Transverse colon (tissue), 4 donors: ENCODE measurements at regions of chr3 and their contacts with region 1.

Region 1: GRCh38 chr3:14124615-14125190 is at the starts of genes CHCHD4 and TMEM43:
- DNase-seq: peak; percentile 99
- H3K4me3 ChIP-seq: peak within 1 kb of the TSS; percentile 60 to 88 (median 78)
- H3K27ac ChIP-seq: peak within 1 kb of the TSS; percentile 90 to 97 (median 96)
- H3K4me1 ChIP-seq: peaks cover 16 to 33% (median 29%) of the 10 kb centered on the region in 4 donors
- H3K27me3 ChIP-seq: no peaks in the 10 kb centered on the region
- CTCF ChIP-seq: peak in 1 of 5 experiments; percentile 20
- EP300 ChIP-seq: no peak
- POLR2A ChIP-seq: peak; percentile 84
- total RNA-seq, gene CHCHD4: 0.80 to 22.1 (median 13.5) TPM
- total RNA-seq, gene TMEM43: 30.8 to 128 (median 48.5) TPM

Region 2: DNA sequence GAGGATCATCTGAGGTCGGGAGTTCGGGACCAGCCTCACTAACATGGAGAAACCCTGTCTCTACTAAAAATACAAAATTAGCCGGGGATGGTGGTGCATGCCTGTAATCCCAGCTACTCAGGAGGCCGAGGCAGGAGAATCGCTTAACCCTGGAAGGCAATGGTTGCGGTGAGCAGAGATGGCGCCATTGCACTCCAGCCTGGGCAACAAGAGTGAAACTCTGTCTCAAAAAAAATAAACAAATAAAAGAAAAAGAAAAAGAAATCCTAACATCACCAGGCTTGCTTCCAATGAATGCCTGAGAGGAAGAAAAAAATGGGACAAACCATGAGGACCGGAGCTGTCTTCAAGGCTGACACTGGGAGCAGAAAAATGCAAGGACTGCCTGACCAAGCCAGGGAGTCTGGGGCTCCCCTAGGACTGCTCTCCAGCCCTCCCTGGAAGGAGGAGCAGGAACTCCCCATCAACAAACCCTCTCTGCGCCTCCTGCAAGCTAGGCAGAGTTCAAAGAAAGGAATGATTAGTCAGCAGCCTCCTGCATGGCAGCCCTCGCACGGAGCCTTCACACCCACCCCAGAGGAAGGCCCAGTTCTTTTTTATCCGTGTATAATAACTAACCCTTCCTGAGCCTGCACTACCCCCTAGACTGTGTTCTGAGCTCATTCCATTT is 760.0 kb before region 1 on chr3:
- in situ Hi-C with region 1: no loop called
- intact Hi-C with region 1: no loop called
- DNase-seq: no peak
- H3K4me3 ChIP-seq: no peak overlapping the region
- H3K27ac ChIP-seq: no peak overlapping the region
- H3K4me1 ChIP-seq: no peaks in the 10 kb centered on the region
- H3K27me3 ChIP-seq: no peaks in the 10 kb centered on the region
- CTCF ChIP-seq: no peak
- EP300 ChIP-seq: no peak
- POLR2A ChIP-seq: no peak

Region 3: DNA sequence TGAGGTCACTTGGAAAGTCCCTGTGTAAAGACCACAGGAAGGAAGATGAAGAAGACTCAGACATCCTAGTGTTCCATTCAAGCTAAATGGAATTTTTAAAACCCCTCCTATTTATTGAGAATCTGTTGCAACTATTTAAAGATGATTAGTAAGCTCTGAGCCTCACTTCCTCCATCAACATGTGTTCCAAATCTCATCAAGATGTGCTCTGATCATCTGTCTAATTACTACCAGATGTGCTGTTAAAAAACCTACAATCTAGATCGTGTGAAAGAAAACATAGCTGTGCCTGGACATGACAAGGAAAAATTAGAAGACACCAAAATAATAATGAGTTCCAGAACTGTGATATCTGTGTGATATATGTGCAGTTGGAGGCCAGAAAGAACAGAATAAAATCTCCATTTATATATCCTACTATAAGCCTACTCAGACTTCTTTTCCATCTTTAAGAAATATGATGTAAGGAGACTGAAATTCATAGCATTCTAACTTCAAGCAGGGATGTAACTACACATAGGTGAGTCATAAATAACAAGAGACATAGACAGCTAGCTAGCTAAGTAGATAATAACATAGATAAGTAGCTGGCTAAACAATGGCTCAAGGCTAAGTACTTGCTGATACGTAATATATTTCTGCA is 45.9 kb after region 1 on chr3:
- in situ Hi-C with region 1: loop called in 1 of 4 experiments (anchors 10 kb)
- intact Hi-C with region 1: loop called (anchors 5 kb)
- DNase-seq: no peak
- H3K4me3 ChIP-seq: no peak overlapping the region
- H3K27ac ChIP-seq: no peak overlapping the region
- H3K4me1 ChIP-seq: peaks cover 0 to 11% (median 2%) of the 10 kb centered on the region in 4 donors
- H3K27me3 ChIP-seq: no peaks in the 10 kb centered on the region
- CTCF ChIP-seq: no peak
- EP300 ChIP-seq: no peak
- POLR2A ChIP-seq: no peak

Region 4: GRCh38 chr3:14178247-14179113 is 53.8 kb after region 1 on chr3 and contains the starts of genes LSM3 and XPC:
- in situ Hi-C with region 1: loop called in 1 of 4 experiments (anchors 10 kb)
- intact Hi-C with region 1: loop called (anchors 5 kb)
- DNase-seq: peak; percentile 98
- H3K4me3 ChIP-seq: peak within 1 kb of the TSS; percentile 80 to 97 (median 89)
- H3K27ac ChIP-seq: peak within 1 kb of the TSS; percentile 96 to 99 (median 98)
- H3K4me1 ChIP-seq: peaks cover 11 to 39% (median 24%) of the 10 kb centered on the region in 4 donors
- H3K27me3 ChIP-seq: no peaks in the 10 kb centered on the region
- CTCF ChIP-seq: peak in 2 of 5 experiments; percentile 16 to 26
- EP300 ChIP-seq: no peak
- POLR2A ChIP-seq: peak; percentile 98
- total RNA-seq, gene LSM3: 5.6 to 9.6 (median 8.0) TPM
- total RNA-seq, gene XPC: 30.7 to 287 (median 46.6) TPM

Region 5: GRCh38 chr3:14508961-14509795 is 384.5 kb after region 1 on chr3:
- in situ Hi-C with region 1: no loop called
- intact Hi-C with region 1: no loop called
- DNase-seq: peak; percentile 67
- H3K4me3 ChIP-seq: no peak overlapping the region
- H3K27ac ChIP-seq: no peak overlapping the region
- H3K4me1 ChIP-seq: no peaks in the 10 kb centered on the region
- H3K27me3 ChIP-seq: no peaks in the 10 kb centered on the region
- CTCF ChIP-seq: peak; percentile 77 to 97 (median 95)
- EP300 ChIP-seq: no peak
- POLR2A ChIP-seq: no peak